Astrocyte of the cerebellum (primary cell): ENCODE measurements at regions of chr22 and their contacts with region 1.

Region 1: DNA sequence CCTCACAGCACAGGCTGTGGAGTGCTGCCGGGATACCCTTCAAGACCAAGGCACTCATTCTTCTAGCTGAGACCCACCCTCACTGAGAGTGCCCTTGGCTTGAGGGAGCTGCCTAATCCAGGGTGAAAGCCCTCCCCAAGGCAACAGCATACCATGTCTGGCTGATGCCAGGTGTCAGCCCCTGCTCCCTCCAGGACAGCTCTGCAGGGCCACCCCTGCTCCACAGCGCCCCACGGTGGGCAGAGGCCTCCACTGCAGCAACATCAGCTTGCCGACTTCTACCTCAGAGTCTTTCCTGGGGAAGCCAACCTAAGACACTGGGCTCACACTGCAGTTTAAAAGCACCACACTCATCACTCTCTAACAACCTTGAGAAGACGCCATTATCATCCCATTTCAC is 29.0 kb downstream of the TTLL1 start:
- DNase-seq: no peak
- H3K4me3 ChIP-seq: no peak overlapping the region
- CTCF ChIP-seq: peak; percentile 69

Region 2: DNA sequence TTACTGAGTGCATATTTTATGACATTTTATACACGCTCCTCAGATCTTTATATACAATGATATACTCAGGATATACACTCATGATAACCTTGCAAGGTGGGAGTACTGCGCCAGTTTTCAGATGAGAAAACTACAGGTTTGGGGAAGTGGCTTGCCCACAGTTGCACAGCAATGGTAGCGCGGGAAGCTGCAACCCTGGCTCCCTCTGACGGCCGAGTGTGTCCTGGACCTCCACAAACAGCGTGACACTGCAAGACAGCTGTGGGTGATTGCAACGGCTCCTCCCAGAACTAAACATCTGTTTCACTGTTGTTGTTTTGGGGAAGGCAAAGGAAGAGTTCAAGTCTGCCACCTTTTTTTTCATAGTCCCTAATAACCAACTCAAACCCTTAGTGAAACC is 92.2 kb before region 1 on chr22:
- in situ Hi-C with region 1: loop called (anchors 5 kb)
- DNase-seq: no peak
- H3K4me3 ChIP-seq: no peak overlapping the region
- CTCF ChIP-seq: no peak